ENCODE measurements at regions of chr10 and their contacts with region 1.

Region 1: DNA sequence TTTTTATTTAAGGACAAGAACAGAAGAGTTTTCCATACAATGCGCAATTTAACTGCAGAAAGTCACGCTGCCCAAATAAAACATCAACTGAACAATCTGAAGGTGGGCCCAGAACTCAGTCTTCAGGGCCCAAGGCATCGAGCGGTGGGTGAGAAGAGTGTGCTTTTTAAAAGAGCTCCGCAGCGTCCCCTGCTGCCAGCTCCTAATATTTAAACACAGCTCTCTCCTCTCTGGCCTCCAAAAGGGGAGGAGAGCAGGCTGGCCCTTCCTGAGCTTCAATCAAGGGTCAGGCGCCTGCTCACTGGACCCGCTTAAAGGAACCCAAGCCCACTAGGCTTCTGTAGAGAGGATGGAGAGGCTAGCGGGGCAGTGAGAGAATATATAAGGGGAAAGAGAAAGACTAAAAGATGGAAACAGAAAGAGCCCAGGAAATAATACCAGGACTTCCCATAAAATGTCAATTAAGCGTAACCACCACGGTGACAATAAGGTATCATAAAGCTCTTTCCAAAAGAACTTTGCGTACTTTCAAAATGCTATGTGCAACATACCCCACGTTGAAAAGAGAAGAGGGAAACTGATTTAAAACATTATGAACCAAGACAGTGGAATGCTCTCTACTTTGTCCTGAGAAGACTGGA is 2.8 kb downstream of the FAM53B start:
- DNase-seq: peak; percentile 81 to 90
- ATAC-seq: peak; percentile 55 to 86 (median 76)
- H3K4me3 ChIP-seq: peak overlapping the region in 8 of 10 donors; percentile 0 to 86 (median 76)
- H3K27ac ChIP-seq: peak overlapping the region; percentile 72 to 86 (median 83)
- H3K4me1 ChIP-seq: peaks cover 48 to 79% (median 78%) of the 10 kb centered on the region in 9 donors
- H3K27me3 ChIP-seq: no peaks in the 10 kb centered on the region
- CTCF ChIP-seq: peak; percentile 73 to 92 (median 89)

Region 2: DNA sequence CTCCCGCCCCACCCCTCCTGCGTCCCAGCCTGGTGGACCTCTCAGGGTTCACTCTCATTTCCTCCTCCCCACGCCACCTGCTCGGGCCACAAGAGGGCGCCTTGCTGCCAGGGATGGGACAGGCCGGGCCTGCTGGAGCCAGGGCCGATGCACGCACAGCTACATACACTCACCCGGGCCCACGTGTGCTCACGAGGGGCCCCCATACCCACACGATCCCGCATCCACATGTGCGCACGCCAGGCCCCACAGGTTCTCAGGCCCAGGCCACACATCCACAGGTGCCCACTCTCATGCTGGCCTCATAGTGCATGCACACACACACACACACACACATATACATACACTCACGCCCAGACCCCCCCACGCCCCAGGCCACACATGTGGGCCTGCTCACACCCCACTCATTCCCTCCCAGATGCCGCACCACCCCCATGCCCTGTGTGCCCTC is 211.2 kb before region 1 on chr10:
- intact Hi-C with region 1: loop called in 5 of 10 experiments (anchors 1 to 5 kb)
- DNase-seq: peak; percentile 87 to 90
- ATAC-seq: peak; percentile 75 to 91 (median 84)
- H3K4me3 ChIP-seq: no peak overlapping the region
- H3K27ac ChIP-seq: no peak overlapping the region
- H3K4me1 ChIP-seq: peaks cover 0 to 24% (median 6%) of the 10 kb centered on the region in 9 donors
- H3K27me3 ChIP-seq: no peaks in the 10 kb centered on the region
- CTCF ChIP-seq: peak; percentile 84 to 92 (median 89)

Region 3: DNA sequence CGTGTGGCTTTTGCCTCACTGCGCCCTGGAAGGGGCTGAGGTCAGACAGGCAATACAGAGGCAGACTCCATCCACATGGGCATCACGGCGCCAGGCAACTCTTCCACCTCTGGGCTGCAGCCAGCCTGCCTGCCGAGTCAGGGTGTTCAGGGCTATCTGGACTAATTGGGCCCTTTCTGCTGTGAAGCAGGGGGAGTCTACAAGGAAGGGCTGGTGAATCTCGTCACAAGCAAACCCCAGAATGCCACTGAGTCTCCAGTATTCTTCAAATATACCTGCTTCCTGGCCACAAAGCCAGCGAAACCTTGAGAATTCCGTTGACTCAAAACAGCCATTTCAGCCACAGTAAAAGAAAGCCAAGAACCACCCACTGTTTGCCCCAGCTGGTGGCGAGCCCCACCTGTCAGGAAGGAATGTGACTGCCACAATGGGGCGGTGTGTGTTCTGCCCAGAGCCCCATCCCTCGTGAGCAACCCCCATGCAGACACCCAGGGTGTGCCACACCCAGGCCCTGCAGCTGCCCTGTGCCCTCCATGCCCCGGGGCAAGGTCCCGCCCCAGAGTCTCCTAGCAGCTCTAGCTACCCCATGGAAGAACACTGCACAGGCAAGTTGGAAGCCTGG is 114.5 kb before region 1 on chr10:
- intact Hi-C with region 1: loop called in 7 of 10 experiments (anchors 2 to 5 kb)
- DNase-seq: no peak
- ATAC-seq: no peak
- H3K4me3 ChIP-seq: no peak overlapping the region
- H3K27ac ChIP-seq: peak overlapping the region in 6 of 10 donors; percentile 50 to 76 (median 66)
- H3K4me1 ChIP-seq: peaks cover 61 to 100% (median 97%) of the 10 kb centered on the region in 9 donors
- H3K27me3 ChIP-seq: no peaks in the 10 kb centered on the region
- CTCF ChIP-seq: no peak

Region 4: GRCh38 chr10:124647421-124648130 is 93.8 kb before region 1 on chr10:
- intact Hi-C with region 1: loop called in 6 of 10 experiments (anchors 2 to 5 kb)
- DNase-seq: peak; percentile 64 to 65
- ATAC-seq: peak in 7 of 8 donors; percentile 25 to 76 (median 55)
- H3K4me3 ChIP-seq: no peak overlapping the region
- H3K27ac ChIP-seq: peak overlapping the region; percentile 46 to 91 (median 78)
- H3K4me1 ChIP-seq: peaks cover 72 to 100% (median 99%) of the 10 kb centered on the region in 9 donors
- H3K27me3 ChIP-seq: no peaks in the 10 kb centered on the region
- CTCF ChIP-seq: peak in 6 of 9 donors; percentile 16 to 52 (median 32)

Region 5: GRCh38 chr10:124701435-124701834 is 40.0 kb before region 1 on chr10:
- intact Hi-C with region 1: loop called in 7 of 10 experiments (anchors 1 to 5 kb)
- DNase-seq: peak; percentile 92 to 97
- ATAC-seq: peak; percentile 86 to 91 (median 88)
- H3K4me3 ChIP-seq: no peak overlapping the region
- H3K27ac ChIP-seq: peak overlapping the region; percentile 74 to 98 (median 91)
- H3K4me1 ChIP-seq: peaks cover 72 to 100% (median 97%) of the 10 kb centered on the region in 9 donors
- H3K27me3 ChIP-seq: no peaks in the 10 kb centered on the region
- CTCF ChIP-seq: peak in 3 of 9 donors; percentile 9 to 30 (median 12)

Region 6: DNA sequence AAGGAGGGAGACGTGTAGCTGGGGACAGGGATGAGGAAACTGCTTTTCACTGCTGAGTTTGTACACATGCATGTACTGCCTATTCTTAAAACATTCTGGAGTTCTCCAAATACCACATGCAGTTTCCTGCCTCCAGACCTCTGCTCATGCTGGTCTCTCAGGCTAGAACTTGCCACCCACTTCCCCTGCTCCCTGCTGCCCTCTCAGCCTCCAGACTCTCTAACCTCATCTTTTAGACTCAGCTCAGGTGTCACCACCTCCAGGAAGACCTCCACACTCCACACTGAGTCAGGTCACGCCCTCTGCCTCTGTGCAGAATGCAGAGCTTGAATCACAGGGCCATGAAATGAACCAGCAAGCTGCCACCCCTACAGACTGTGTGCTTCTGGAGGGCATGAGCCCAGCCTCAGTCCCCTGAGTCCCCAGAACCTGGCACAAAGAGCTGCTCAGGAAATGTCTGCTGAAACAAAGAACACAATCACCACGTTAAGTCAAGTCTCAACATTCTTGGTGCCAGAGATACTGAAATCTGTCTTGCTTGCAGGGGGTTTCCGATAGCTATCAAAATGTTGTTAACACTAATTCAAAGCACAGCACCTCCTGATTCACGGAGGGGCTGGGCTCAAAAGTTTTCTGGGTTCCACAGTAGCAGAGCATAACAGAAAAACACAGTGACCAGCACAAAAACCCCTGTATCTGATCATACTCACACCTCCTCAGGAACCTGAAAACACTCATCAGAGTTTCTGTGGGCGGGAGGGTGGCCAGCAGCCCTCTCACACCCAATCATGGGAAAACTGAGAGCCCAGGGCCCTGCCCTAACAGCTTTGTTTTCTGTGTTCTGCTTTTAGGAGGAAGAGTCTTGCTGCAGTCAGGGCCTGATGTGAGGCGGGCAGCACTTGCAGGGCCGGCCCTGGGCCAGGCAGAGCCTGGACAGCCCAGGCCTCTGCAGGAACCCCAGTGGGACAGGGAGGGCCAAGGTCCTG is 18.3 kb before region 1 on chr10:
- intact Hi-C with region 1: loop called in 1 of 10 experiments (anchors 2 kb)
- DNase-seq: peak in 1 of 2 donors; percentile 67
- ATAC-seq: peak; percentile 29 to 67 (median 50)
- H3K4me3 ChIP-seq: peak overlapping the region in 1 of 10 donors; percentile 12
- H3K27ac ChIP-seq: peak overlapping the region; percentile 65 to 90 (median 80)
- H3K4me1 ChIP-seq: peaks cover 42 to 100% (median 99%) of the 10 kb centered on the region in 9 donors
- H3K27me3 ChIP-seq: no peaks in the 10 kb centered on the region
- CTCF ChIP-seq: no peak

Region 7: DNA sequence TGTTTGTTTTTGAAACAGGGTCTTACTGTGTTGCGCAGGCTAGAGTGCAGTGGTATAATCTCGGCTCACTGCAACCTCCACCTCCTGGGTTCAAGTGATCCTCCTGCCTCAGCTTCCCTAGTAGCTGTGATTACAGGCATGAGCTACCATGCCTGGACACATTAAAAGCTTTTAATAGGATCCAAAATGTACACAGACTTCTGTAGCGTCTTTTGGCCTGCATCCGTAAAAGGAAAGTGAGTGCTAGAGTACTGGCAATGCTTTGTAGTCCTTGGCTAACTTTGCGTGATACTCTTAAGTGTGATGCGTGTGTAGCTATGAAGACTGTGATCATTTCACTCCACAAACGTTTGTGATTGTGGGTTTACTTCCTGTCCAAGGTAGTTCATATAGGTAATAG is 213.8 kb after region 1 on chr10:
- intact Hi-C with region 1: no loop called
- DNase-seq: no peak
- ATAC-seq: peak in 3 of 8 donors; percentile 27 to 41 (median 28)
- H3K4me3 ChIP-seq: no peak overlapping the region
- H3K27ac ChIP-seq: peak overlapping the region in 1 of 10 donors; percentile 13
- H3K4me1 ChIP-seq: peaks cover 0 to 59% (median 32%) of the 10 kb centered on the region in 9 donors
- H3K27me3 ChIP-seq: no peaks in the 10 kb centered on the region
- CTCF ChIP-seq: no peak